Pancreas (tissue), 10 donors: ENCODE measurements at regions of chr7 and their contacts with region 1.

Region 1: DNA sequence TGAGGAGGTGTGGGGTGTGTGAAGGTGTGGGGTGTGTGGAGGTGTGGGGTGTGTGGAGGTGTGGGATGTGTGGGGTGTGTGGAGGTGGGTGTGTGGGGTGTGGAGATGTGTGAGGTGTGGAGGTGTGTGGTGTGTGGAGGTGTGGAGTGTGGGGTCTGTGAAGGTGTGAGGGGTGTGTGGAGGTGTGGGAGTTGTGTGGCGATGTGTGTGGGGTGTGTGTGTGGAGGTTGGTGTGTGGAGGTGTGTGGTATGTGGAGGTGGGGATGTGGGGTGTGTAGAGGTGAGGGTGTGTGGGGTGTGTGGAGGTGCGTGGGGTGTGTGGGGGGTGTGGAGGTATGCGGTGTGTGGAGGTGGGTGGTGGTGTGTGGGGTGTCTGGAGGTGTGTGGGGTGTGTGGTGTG is 34.8 kb downstream of the SPDYE17 start:
- DNase-seq: peak in 1 of 6 donors; percentile 35
- ATAC-seq: peak in 2 of 4 donors; percentile 10 to 13
- H3K4me3 ChIP-seq: no peak overlapping the region
- H3K27ac ChIP-seq: no peak overlapping the region
- H3K4me1 ChIP-seq: no peaks in the 10 kb centered on the region
- H3K27me3 ChIP-seq: no peaks in the 10 kb centered on the region
- CTCF ChIP-seq: no peak

Region 2: GRCh38 chr7:76509931-76510877 is 487.2 kb before region 1 on chr7 and contains the start of gene UPK3B:
- intact Hi-C with region 1: loop called in 1 of 3 experiments (anchors 5 kb)
- DNase-seq: peak in 2 of 6 donors; percentile 17 to 77
- ATAC-seq: peak in 3 of 4 donors; percentile 27 to 46 (median 32)
- H3K4me3 ChIP-seq: no peak within 1 kb of the TSS
- H3K27ac ChIP-seq: no peak within 1 kb of the TSS
- H3K4me1 ChIP-seq: no peaks in the 10 kb centered on the region
- H3K27me3 ChIP-seq: no peaks in the 10 kb centered on the region
- CTCF ChIP-seq: no peak
- total RNA-seq, gene UPK3B: 0.41 to 2.3 (median 0.89) TPM